Activated T-helper 1 cell treated with anti-CD3 and anti-CD28 coated beads, Interleukin-12 subunit alpha, Interleukin-12 subunit beta, Interleukin-2, Interleukin-4 antibody, amounts not matched to agents 30 ng/mL and 10 ng/mL and 1 ng/mL, durations not matched to agents 14 hours and 24 hours and 36 hours (primary cell): ENCODE measurements at regions of chr11 and their contacts with region 1.

Region 1: GRCh38 chr11:119121008-119121810 is at the start of gene HINFP:
- DNase-seq: peak; percentile 99
- H3K4me3 Mint-ChIP-seq: peak within 1 kb of the TSS; percentile 98
- H3K27ac Mint-ChIP-seq: peak within 1 kb of the TSS; percentile 83
- H3K4me1 Mint-ChIP-seq: peaks cover 36% of the 10 kb centered on the region
- H3K27me3 Mint-ChIP-seq: no peaks in the 10 kb centered on the region
- total RNA-seq, gene HINFP: 31.2 and 35.2 TPM in 2 replicates

Region 2: DNA sequence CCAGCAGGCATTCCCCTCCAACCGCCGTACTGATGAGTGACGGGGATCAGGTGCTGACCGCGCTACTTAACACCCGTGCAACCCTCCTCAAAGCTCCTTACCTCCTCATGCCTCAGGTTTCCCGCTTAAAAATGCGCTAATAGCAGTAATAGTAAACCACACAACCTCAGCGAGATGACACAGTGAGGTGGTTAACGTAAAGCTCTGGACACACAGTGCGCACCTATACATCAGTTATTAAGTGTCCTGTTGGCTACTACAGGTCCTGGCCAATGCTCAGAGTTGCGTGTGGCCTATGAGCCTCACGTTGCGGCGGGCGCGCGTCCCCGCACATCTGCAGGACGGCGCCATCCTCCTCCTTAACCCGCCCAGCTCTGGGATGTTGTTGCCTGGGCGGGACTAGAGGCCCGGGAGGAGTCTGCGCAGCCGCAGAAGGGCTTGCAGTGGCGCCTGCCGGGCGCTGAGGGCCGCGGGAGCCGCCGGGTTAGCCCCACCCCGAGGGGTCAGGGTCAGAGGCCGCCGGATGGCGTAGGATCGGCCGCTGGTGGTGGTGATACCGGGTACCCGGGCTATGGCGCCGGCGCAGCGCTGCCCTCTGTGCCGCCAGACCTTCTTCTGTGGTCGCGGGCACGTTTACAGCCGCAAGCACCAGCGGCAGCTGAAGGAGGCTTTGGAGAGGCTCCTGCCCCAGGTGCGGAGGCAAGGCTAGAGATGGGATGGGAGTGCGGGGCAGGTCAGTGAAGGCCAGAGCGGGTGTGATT is 123.4 kb before region 1 on chr11 and contains the start of gene CENATAC:
- intact Hi-C with region 1: loop called (anchors 1 kb)
- DNase-seq: peak; percentile 96
- H3K4me3 Mint-ChIP-seq: peak within 1 kb of the TSS; percentile 96
- H3K27ac Mint-ChIP-seq: peak within 1 kb of the TSS; percentile 97
- H3K4me1 Mint-ChIP-seq: peaks cover 27% of the 10 kb centered on the region
- H3K27me3 Mint-ChIP-seq: no peaks in the 10 kb centered on the region
- total RNA-seq, gene CENATAC: 50.1 and 53.6 TPM in 2 replicates

Region 3: GRCh38 chr11:119057000-119057769 is 64.0 kb before region 1 on chr11 and contains the start of gene HYOU1:
- intact Hi-C with region 1: loop called (anchors 1 kb)
- DNase-seq: peak; percentile 98
- H3K4me3 Mint-ChIP-seq: peak within 1 kb of the TSS; percentile 97
- H3K27ac Mint-ChIP-seq: peak within 1 kb of the TSS; percentile 99
- H3K4me1 Mint-ChIP-seq: peaks cover 48% of the 10 kb centered on the region
- H3K27me3 Mint-ChIP-seq: no peaks in the 10 kb centered on the region
- total RNA-seq, gene HYOU1: 216 and 219 TPM in 2 replicates

Region 4: GRCh38 chr11:119095066-119095880 is 25.9 kb before region 1 on chr11:
- intact Hi-C with region 1: loop called (anchors 1 kb)
- DNase-seq: peak; percentile 100
- H3K4me3 Mint-ChIP-seq: peak overlapping the region; percentile 95
- H3K27ac Mint-ChIP-seq: peak overlapping the region; percentile 91
- H3K4me1 Mint-ChIP-seq: peaks cover 59% of the 10 kb centered on the region
- H3K27me3 Mint-ChIP-seq: peaks cover 4% of the 10 kb centered on the region

Region 5: GRCh38 chr11:119168471-119169281 is 47.5 kb after region 1 on chr11 and contains the start of gene NLRX1:
- intact Hi-C with region 1: loop called (anchors 1 kb)
- DNase-seq: peak; percentile 77
- H3K4me3 Mint-ChIP-seq: peak within 1 kb of the TSS; percentile 92
- H3K27ac Mint-ChIP-seq: peak within 1 kb of the TSS; percentile 94
- H3K4me1 Mint-ChIP-seq: peaks cover 24% of the 10 kb centered on the region
- H3K27me3 Mint-ChIP-seq: peaks cover 2% of the 10 kb centered on the region
- total RNA-seq, gene NLRX1: 24.1 and 29.5 TPM in 2 replicates

Region 6: DNA sequence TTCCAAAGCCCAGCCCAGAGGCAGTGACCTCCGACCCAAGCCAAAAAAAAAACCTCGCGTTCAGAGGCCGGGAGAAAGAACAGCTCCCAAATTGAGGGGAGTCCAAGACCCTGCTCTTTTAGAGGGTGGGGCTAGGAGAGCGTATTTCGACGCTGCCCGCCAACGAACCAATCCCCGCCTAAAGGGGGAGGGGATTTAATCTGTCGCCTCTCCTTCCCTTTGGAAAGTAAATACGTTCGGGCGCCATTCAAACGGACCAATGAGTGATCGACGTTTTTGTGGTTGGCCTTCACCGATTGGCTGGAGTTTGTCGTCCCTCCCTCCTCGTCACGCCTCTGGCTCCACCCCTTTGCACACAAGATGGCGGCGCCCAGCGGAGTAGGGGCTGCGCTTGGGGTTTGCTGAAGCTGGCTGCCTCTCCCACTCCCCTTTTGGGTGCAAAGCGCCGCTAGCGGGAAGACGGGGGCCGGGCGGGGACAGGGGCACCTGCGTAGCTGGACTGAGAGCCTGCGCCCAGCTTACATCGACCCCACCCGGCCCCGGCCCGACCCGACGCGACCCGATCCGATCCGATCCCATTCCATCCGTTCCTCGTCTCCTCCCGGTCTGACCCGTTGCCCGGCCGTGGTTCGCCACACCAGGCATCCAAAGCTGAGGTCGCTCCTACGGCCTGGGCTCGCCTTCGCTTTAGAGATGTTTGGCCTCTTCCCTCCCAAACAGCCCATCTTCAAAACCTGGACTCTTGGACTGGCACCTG is 213.1 kb after region 1 on chr11 and contains the start of gene RNF26:
- intact Hi-C with region 1: loop called (anchors 1 kb)
- DNase-seq: peak; percentile 93
- H3K4me3 Mint-ChIP-seq: peak within 1 kb of the TSS; percentile 97
- H3K27ac Mint-ChIP-seq: peak within 1 kb of the TSS; percentile 96
- H3K4me1 Mint-ChIP-seq: peaks cover 53% of the 10 kb centered on the region
- H3K27me3 Mint-ChIP-seq: peaks cover 25% of the 10 kb centered on the region
- total RNA-seq, gene RNF26: 26.1 and 27.9 TPM in 2 replicates